ENCODE measurements at regions of chr1 and their contacts with region 1.

Region 1: GRCh38 chr1:63917571-63918417 is 144.0 kb downstream of the ROR1 start:
- DNase-seq: peak in 1 of 10 donors; percentile 51
- H3K4me3 ChIP-seq: no peak overlapping the region
- H3K27ac ChIP-seq: peak overlapping the region in 1 of 59 donors; percentile 68
- H3K27me3 ChIP-seq: no peaks in the 10 kb centered on the region
- CTCF ChIP-seq: peak in 2 of 56 donors; percentile 12 to 13

Region 2: DNA sequence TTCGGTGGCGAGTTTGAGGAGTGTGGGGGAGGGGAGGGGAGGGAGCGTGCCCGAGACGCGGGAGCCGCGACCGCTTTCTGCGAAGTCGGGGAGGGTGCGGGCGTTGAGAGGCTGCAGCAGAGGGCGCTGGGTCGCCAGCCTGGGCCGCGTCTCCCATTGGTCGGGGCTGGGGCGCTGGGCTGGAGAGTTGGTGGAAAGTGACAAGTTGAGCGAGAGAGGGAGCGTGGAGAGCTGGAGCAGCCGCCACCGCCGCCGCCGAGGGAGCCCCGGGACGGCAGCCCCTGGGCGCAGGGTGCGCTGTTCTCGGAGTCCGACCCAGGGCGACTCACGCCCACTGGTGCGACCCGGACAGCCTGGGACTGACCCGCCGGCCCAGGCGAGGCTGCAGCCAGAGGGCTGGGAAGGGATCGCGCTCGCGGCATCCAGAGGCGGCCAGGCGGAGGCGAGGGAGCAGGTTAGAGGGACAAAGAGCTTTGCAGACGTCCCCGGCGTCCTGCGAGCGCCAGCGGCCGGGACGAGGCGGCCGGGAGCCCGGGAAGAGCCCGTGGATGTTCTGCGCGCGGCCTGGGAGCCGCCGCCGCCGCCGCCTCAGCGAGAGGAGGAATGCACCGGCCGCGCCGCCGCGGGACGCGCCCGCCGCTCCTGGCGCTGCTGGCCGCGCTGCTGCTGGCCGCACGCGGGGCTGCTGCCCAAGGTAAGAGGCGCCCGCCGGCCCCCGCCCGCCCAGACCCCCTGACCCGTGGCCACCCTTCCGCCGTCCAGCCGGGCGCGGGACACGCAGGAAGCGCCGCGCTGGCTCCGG is 143.8 kb before region 1 on chr1 and contains the start of gene ROR1:
- intact Hi-C with region 1: loop called in 1 of 2 experiments (anchors 5 kb)
- DNase-seq: peak; percentile 75 to 94 (median 81)
- H3K4me3 ChIP-seq: peak within 1 kb of the TSS; percentile 55 to 87 (median 72)
- H3K27ac ChIP-seq: peak within 1 kb of the TSS in 46 of 59 donors; percentile 31 to 89 (median 74)
- H3K27me3 ChIP-seq: peaks cover 0 to 12% (median 0%) of the 10 kb centered on the region in 45 donors
- CTCF ChIP-seq: peak in 55 of 56 donors; percentile 30 to 87 (median 69)
- total RNA-seq, gene ROR1: 0.53 to 5.6 (median 3.1) TPM

Region 3: DNA sequence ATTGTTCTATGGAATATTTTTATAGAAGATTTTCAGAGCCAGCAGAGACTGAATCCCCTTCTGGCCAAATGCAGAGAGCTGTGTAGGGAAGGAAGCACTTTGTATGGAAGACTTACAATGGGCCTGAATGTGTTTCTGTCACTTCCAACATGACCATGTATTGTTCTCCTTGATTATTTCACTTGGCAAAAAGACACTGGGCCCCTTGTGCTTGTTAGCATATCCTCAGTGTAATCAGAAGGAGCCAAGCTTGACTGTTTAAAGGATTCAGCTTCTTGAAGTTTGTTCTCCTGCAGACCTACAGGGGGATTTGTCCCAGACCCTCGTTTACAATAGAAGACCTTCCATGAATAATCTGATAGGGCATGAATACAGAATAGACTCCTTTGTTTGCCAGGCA is 237.5 kb after region 1 on chr1:
- intact Hi-C with region 1: loop called in 1 of 2 experiments (anchors 10 kb)
- DNase-seq: no peak
- H3K4me3 ChIP-seq: peak overlapping the region in 5 of 59 donors; percentile 8 to 39 (median 20)
- H3K27ac ChIP-seq: peak overlapping the region in 52 of 59 donors; percentile 2 to 90 (median 68)
- H3K27me3 ChIP-seq: no peaks in the 10 kb centered on the region
- CTCF ChIP-seq: peak in 11 of 56 donors; percentile 7 to 34 (median 18)